Activated CD4-positive, alpha-beta memory T cell treated with anti-CD3 and anti-CD28 coated beads, Interleukin-2, amount 10 ng/mL, durations not matched to agents 7 days and 5 days (primary cell): ENCODE measurements at regions of chr3 and their contacts with region 1.

Region 1: DNA sequence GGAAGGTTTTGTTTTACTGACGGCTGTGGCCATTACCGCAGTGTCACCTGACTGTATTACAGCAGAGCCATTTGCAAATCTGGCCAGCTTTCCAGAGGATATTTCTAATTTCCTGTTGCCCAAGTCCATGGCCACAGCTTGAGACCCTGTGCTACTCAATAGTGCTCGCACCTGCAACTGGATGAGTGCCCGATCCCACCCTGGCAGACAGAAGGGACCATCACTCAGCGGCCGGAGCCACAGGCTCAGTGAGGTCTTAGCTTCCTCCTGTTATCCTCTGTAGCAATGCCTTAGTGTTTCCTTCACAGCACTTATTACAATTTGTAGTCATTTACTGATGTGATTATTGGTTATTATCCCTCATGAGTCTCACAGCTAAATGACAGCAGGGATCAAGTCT is 184.8 kb downstream of the LRRN1 start:
- DNase-seq: no peak
- H3K4me3 Mint-ChIP-seq: no peak overlapping the region
- H3K27ac Mint-ChIP-seq: no peak overlapping the region
- H3K4me1 Mint-ChIP-seq: no peaks in the 10 kb centered on the region
- H3K27me3 Mint-ChIP-seq: no peaks in the 10 kb centered on the region

Region 2: GRCh38 chr3:3998140-3998922 is 14.3 kb after region 1 on chr3:
- CTCF ChIA-PET with region 1: interaction called, 13 read pairs
- POLR2A ChIA-PET with region 1: no interaction called
- DNase-seq: peak; percentile 23
- H3K4me3 Mint-ChIP-seq: no peak overlapping the region
- H3K27ac Mint-ChIP-seq: no peak overlapping the region
- H3K4me1 Mint-ChIP-seq: no peaks in the 10 kb centered on the region
- H3K27me3 Mint-ChIP-seq: peaks cover 3% of the 10 kb centered on the region